Head of caudate nucleus (tissue), 42 donors: ENCODE measurements at regions of chr21 and their contacts with region 1.

Region 1: GRCh38 chr21:33542640-33543504 is at the start of gene SON:
- DNase-seq: peak; percentile 98 to 100 (median 100)

Region 2: DNA sequence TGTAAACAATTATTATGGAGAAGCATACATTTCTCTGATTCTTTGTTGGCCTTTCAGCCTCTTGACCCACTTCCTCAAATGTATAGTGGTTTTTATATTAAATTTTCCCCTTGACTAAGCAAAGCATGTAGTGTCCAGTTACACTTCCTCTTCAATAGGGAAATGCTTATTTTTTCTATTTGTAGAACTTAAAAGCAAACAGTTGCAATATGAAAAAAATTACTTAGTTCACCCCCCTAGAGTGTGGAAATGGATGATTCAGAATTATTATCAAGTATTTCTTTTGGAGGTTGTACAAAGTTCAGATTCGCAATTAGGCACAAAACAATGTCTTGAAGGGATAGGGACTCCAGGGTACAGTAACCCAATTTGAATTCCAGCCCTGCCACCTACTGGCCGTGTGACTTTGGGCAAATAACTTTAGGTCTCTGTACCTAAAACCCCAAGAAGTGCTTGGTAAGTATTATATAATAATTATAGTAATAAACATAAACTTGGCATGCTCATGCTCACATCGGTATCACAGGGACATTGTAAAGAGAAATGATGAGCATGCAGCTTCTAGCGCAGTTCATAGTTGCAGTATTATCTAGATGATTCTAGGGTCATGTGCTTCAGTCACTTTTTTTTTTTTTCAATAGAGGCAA is 168.3 kb before region 1 on chr21:
- intact Hi-C with region 1: no loop called
- DNase-seq: peak in 28 of 42 donors; percentile 26 to 66 (median 48)

Region 3: GRCh38 chr21:33479679-33480480 is 63.0 kb before region 1 on chr21 and contains the start of gene TMEM50B:
- intact Hi-C with region 1: loop called (anchors 5 kb)
- DNase-seq: peak; percentile 86 to 99 (median 97)

Region 4: DNA sequence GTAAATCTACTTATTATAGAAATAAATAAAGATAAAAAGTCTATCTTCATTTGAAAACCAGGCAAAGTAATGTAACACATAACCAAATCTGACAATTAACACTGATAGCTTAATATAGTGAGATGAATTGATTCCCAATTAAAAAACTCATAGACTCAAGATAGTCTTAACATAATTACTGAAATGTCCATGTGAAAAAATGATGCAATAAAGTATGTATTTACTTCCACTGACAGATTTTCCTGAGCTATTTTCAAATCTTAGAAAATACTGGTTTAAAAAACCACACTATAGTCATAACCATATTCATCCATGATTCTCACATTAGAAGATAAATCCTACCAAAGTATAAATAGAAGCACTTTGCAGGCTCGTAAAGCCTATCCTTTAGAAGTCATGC is 55.2 kb after region 1 on chr21:
- intact Hi-C with region 1: loop called (anchors 10 kb)
- DNase-seq: no peak

Region 5: GRCh38 chr21:33641336-33642026 is 98.6 kb after region 1 on chr21 and contains the start of gene CRYZL1:
- intact Hi-C with region 1: loop called (anchors 5 kb)
- DNase-seq: peak; percentile 100